Activated CD8-positive, alpha-beta T cell treated with anti-CD3 and anti-CD28 coated beads for 36 hours (primary cell): ENCODE measurements at regions of chr9 and their contacts with region 1.

Region 1: DNA sequence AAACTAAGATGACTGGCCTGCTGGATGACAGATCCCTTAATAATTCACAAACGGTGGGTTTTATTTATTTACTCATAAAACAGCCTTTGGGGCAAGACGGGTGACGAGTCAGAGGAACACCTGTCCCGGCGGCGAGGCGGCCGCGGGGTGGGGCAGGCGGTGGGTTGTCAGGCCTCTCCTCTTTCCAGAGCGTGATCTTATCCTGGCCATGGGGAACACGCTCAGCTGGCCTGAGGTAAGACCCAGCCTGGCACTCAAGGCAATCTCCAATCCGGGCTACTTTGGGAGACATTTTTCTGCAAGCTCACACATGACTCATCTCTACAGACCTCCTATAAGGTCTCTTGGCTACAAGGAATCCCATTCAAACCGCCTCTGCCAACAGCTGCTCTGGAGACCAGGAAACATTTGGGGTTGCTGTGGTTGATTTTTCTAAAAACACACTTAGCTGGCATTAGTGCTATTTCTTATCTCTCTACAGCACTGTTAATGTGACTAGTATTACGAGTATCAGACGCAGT is 6.3 kb downstream of the RAPGEF1 start:
- DNase-seq: peak; percentile 72
- ATAC-seq: peak; percentile 6
- H3K4me3 Mint-ChIP-seq: peak overlapping the region; percentile 41
- H3K27ac Mint-ChIP-seq: peak overlapping the region; percentile 92
- H3K4me1 Mint-ChIP-seq: peaks cover 88% of the 10 kb centered on the region
- H3K27me3 Mint-ChIP-seq: no peaks in the 10 kb centered on the region
- CTCF ChIP-seq: no peak

Region 2: GRCh38 chr9:131590908-131591844 is 142.4 kb before region 1 on chr9:
- CTCF ChIA-PET with region 1: interaction called, 115 read pairs
- POLR2A ChIA-PET with region 1: no interaction called
- intact Hi-C with region 1: loop called (anchors 5 kb)
- DNase-seq: peak; percentile 90
- ATAC-seq: peak; percentile 94
- H3K4me3 Mint-ChIP-seq: no peak overlapping the region
- H3K27ac Mint-ChIP-seq: peak overlapping the region; percentile 86
- H3K4me1 Mint-ChIP-seq: peaks cover 25% of the 10 kb centered on the region
- H3K27me3 Mint-ChIP-seq: no peaks in the 10 kb centered on the region
- CTCF ChIP-seq: peak; percentile 93

Region 3: GRCh38 chr9:131656356-131657036 is 77.1 kb before region 1 on chr9:
- CTCF ChIA-PET with region 1: interaction called, 4 read pairs
- POLR2A ChIA-PET with region 1: interaction called, 8 read pairs
- intact Hi-C with region 1: loop called (anchors 5 kb)
- DNase-seq: peak; percentile 82
- ATAC-seq: peak; percentile 79
- H3K4me3 Mint-ChIP-seq: peak overlapping the region; percentile 37
- H3K27ac Mint-ChIP-seq: peak overlapping the region; percentile 94
- H3K4me1 Mint-ChIP-seq: peaks cover 84% of the 10 kb centered on the region
- H3K27me3 Mint-ChIP-seq: no peaks in the 10 kb centered on the region
- CTCF ChIP-seq: no peak

Region 4: DNA sequence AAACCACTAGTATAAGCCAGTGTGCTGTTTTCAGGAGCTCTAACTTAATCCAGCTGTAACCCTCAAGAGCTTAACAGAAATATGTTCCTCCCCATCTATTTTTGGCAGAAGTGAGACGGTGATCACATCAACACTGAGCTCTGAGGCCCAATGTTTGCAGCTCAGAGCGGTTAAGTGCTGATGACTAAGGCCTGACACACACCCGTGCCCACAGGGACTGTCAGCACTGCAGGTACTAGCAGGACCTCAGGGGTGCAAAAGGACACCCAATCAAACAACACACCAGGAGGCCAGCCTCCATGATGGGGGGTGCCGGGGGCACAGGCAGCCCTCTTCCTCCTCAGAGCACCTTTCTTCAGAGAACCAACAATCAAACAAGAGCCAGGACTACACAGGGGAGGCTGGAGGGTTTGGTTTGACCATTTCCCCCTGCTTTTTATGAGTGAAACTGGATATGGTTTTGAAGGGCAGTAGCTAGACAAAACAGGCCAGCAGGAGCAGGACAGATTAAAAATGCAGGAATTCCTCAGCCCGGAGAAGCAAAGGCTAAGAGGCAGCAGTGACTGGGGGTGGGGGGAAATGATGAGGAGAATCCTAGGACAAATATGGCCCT is 55.0 kb before region 1 on chr9:
- CTCF ChIA-PET with region 1: interaction called, 32 read pairs
- POLR2A ChIA-PET with region 1: interaction called, 38 read pairs
- intact Hi-C with region 1: no loop called
- DNase-seq: peak; percentile 94
- ATAC-seq: peak; percentile 99
- H3K4me3 Mint-ChIP-seq: peak overlapping the region; percentile 64
- H3K27ac Mint-ChIP-seq: peak overlapping the region; percentile 94
- H3K4me1 Mint-ChIP-seq: peaks cover 82% of the 10 kb centered on the region
- H3K27me3 Mint-ChIP-seq: no peaks in the 10 kb centered on the region
- CTCF ChIP-seq: no peak

Region 5: DNA sequence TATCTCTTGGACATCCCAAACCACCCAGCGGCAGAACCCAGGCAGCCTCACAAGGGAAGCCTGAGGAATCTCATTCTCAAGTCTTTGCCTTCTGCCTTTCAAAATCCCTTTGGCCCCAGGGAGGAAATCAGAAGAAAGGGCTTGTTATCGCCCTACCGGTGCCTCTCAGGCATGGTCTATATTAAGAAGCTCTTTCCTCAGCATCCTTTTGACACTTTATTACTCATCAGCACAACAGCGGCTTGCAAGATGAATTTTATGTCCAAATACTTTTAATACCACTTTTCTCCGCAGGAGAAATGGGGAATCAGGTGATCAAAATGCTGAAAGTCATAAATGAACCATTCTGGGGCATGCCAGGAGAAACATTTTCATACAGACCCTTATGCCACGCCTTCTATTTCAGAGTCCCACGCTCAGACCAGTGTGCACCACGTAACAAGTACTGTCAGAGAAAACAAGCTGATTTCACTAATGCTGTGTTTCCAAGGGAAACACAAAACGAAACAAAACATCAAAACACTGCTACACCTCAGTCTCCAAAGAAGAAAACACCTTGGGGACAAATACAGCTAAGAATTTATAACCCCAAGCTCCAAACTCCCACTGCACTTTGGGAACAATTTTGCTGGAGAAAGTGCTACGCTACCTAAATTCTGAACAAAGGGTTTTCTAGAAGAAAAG is 23.7 kb before region 1 on chr9:
- CTCF ChIA-PET with region 1: interaction called, 22 read pairs
- POLR2A ChIA-PET with region 1: interaction called, 119 read pairs
- intact Hi-C with region 1: no loop called
- DNase-seq: peak; percentile 60
- ATAC-seq: peak; percentile 76
- H3K4me3 Mint-ChIP-seq: peak overlapping the region; percentile 42
- H3K27ac Mint-ChIP-seq: peak overlapping the region; percentile 90
- H3K4me1 Mint-ChIP-seq: peaks cover 72% of the 10 kb centered on the region
- H3K27me3 Mint-ChIP-seq: no peaks in the 10 kb centered on the region
- CTCF ChIP-seq: no peak

Region 6: DNA sequence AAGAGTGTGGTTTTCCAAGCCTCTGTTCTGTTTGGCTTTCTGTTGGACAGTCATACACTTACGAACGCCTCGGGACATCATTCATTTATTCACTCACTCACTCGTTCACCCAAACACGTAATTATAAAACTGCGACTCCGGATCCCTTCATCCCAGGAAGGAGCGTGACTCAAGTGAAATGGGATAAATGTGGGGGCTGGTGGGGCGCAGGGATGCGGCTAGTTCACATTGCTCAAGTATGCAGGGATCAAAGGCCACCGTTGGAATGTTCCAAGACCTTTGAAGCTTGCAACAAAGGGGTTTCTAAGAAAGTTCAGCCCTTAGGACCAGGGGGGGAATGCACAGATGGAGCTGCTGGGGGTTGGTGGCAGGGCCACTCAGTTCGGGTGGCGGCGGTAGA is 740.7 kb after region 1 on chr9:
- CTCF ChIA-PET with region 1: no interaction called
- POLR2A ChIA-PET with region 1: no interaction called
- intact Hi-C with region 1: no loop called
- DNase-seq: no peak
- ATAC-seq: no peak
- H3K4me3 Mint-ChIP-seq: no peak overlapping the region
- H3K27ac Mint-ChIP-seq: no peak overlapping the region
- H3K4me1 Mint-ChIP-seq: peaks cover 2% of the 10 kb centered on the region
- H3K27me3 Mint-ChIP-seq: peaks cover 20% of the 10 kb centered on the region
- CTCF ChIP-seq: no peak